ENCODE measurements at regions of chr7 and their contacts with region 1.

Region 1: GRCh38 chr7:129611246-129612111 is at the start of gene NRF1:
- DNase-seq: peak; percentile 93 to 96
- ATAC-seq: peak; percentile 95
- H3K4me3 ChIP-seq: peak within 1 kb of the TSS; percentile 87 to 98
- H3K27ac ChIP-seq: peak within 1 kb of the TSS; percentile 73 to 89
- H3K4me1 ChIP-seq: peaks cover 0 to 2% of the 10 kb centered on the region in 2 donors
- H3K27me3 ChIP-seq: no peaks in the 10 kb centered on the region
- total RNA-seq, gene NRF1: 19.4 to 23.4 TPM

Region 2: GRCh38 chr7:129224251-129225205 is 387.0 kb before region 1 on chr7 and contains the start of gene AHCYL2:
- intact Hi-C with region 1: loop called in 1 of 2 experiments (anchors 10 kb)
- DNase-seq: peak; percentile 99 to 100
- ATAC-seq: peak; percentile 100
- H3K4me3 ChIP-seq: peak within 1 kb of the TSS; percentile 58 to 72
- H3K27ac ChIP-seq: peak within 1 kb of the TSS in 1 of 2 donors; percentile 96
- H3K4me1 ChIP-seq: no peaks in the 10 kb centered on the region
- H3K27me3 ChIP-seq: no peaks in the 10 kb centered on the region
- total RNA-seq, gene AHCYL2: 12.0 to 19.9 TPM

Region 3: DNA sequence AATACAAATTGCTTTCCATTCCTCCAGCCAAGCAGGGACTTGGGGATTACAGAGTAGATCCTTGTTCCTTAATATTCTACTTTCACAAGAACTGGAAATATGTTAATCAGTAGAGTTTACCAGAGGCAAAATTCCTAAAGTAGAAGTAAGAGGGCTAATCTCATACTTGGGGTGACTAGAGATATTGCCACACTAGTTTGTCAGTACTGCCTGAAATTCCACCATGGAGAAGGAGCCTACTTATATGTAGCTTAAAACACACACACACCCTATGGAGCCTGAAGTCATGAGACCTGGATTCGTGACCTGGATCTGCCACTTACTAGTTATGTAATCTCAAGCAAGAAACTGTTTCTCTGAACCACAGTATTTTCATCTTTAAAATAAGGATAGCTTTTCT is 143.4 kb before region 1 on chr7:
- intact Hi-C with region 1: no loop called
- DNase-seq: no peak
- ATAC-seq: no peak
- H3K4me3 ChIP-seq: no peak overlapping the region
- H3K27ac ChIP-seq: no peak overlapping the region
- H3K4me1 ChIP-seq: no peaks in the 10 kb centered on the region
- H3K27me3 ChIP-seq: no peaks in the 10 kb centered on the region

Region 4: DNA sequence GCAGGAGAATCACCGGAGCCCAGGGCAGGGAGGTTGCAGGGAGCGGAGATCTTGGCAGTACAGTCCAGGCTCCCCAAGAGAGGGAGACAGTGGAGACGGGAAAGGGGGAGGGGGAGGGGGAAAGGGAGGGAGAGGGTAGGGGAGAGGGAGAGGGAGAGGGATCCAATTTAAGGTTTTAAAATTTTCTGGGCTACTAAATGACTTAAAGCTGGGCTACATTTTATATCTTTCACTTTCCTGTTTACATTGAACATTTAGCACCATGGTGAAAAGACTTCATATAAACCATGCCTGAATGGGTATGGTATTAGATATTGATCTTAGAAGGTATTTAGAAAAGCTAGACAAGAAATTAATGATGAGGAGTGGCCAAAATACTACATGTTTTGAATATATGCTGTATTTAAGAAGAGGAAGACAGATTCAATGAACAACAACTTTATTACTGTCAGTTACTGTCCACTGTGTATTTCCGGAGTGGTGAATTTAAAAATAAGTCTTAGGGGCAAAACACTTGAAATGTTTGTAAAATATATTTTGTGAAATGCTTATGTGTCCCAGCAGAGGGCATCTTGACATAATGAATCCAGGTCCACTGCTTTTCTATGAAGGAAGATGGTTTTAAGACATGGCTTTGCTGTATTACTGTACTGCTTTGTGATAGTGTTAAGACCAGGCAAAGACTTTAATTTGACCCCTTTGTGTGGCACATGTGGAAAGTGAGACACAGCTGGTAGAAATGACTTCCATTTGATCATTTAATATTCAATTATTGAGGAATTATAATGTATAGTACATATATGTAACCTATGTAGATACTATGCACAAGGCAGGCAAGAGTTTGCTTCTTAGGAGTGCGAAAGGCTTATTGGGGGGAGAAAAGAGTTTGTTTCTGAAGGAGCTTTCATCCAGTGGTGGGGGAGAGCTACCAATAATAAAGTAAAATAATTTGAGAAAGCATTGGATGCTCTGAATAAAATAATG is 52.8 kb after region 1 on chr7:
- intact Hi-C with region 1: no loop called
- DNase-seq: no peak
- ATAC-seq: no peak
- H3K4me3 ChIP-seq: no peak overlapping the region
- H3K27ac ChIP-seq: no peak overlapping the region
- H3K4me1 ChIP-seq: no peaks in the 10 kb centered on the region
- H3K27me3 ChIP-seq: no peaks in the 10 kb centered on the region

Region 5: DNA sequence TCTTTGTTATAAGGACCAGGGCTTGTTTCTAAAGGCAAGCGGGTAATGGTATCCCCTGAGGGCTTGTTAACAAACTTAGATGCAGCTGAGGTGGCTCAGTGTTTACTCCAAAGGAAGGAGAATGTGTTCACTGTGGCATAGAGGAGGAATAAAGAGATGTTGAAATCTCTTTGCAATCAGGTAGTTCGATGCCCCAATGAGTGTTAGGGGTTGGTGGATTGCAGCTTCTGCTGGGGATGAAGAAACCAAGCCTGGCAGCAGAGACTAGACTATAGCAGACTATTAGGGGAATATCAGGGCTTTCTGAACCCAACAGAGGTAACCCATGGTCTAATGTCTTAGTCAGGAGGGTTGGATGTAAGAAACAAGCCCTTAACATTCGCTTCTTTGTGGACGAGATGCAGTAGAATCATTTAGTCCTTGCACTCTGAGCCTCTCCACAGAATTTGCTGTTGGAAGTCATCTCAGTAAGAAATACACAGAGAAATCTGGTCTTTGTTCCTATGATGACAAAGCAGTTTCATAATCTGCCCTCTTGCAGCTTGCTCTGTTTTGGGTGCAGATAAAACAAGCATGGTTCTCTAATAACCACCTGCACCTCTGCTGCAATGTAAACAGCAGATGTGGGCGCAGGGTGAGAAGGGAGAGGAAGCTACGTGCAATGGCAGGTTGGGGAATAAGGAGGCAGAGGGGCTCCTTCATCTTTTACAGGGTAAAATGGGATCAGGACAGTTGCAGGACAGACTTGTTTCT is 108.7 kb after region 1 on chr7:
- intact Hi-C with region 1: no loop called
- DNase-seq: no peak
- ATAC-seq: no peak
- H3K4me3 ChIP-seq: no peak overlapping the region
- H3K27ac ChIP-seq: no peak overlapping the region
- H3K4me1 ChIP-seq: no peaks in the 10 kb centered on the region
- H3K27me3 ChIP-seq: no peaks in the 10 kb centered on the region